ENCODE measurements at regions of chr20 and their contacts with region 1.

Region 1: DNA sequence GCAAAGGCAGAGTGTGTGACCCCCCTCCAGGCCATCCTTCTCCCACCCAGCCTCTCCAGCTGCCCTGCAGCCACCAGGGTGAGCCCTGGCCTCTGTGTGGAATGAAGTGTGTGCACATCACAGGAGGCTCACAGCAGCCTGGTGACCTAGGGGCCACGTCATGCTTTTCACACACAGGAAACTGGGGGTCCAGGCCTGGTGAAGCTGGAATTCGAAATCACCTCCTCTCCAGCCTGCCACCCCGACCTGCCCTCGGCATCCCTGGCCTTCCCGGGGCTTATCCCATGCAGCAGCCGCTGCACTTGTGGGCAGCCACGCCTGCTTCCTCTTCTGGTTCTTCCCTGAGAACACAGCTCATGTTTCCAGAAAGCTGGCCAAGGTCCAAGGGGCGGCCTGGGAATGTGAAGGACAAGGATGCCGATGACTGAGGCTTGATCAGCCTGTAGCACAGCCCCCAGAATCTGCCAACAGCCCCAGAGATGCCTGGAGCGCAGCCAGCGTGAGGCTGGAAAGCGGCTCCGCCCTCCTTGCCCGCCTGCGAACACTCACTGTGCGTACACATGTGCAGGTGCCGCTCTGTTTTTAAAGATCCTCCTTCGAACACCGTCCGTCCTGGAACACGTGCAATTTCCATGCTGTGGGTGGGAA is 4.2 kb upstream of the NTSR1 start:
- DNase-seq: peak; percentile 77
- ATAC-seq: peak; percentile 44
- H3K4me3 ChIP-seq: peak overlapping the region in 1 of 2 experiments; percentile 32; a peak in 2 of 4 replicates
- H3K27ac ChIP-seq: peak overlapping the region; percentile 91
- H3K4me1 ChIP-seq: peaks cover 70% of the 10 kb centered on the region
- H3K27me3 ChIP-seq: no peaks in the 10 kb centered on the region
- CTCF ChIP-seq: peak; percentile 26; the same call in 1 of the 2 replicates

Region 2: GRCh38 chr20:62668441-62669027 is 35.9 kb before region 1 on chr20:
- CTCF ChIA-PET with region 1: interaction called, 6 read pairs
- POLR2A ChIA-PET with region 1: no interaction called
- in situ Hi-C with region 1: no loop called
- intact Hi-C with region 1: loop called (anchors 5 kb)
- DNase-seq: peak; percentile 30
- ATAC-seq: peak; percentile 52
- H3K4me3 ChIP-seq: no peak overlapping the region
- H3K27ac ChIP-seq: peak overlapping the region; percentile 39; the same call in 1 of the 2 replicates
- H3K4me1 ChIP-seq: peaks cover 52% of the 10 kb centered on the region
- H3K27me3 ChIP-seq: no peaks in the 10 kb centered on the region
- CTCF ChIP-seq: no peak; the same call in 1 of the 2 replicates

Region 3: GRCh38 chr20:62780204-62780603 is 75.8 kb after region 1 on chr20:
- CTCF ChIA-PET with region 1: interaction called, 12 read pairs
- POLR2A ChIA-PET with region 1: no interaction called
- in situ Hi-C with region 1: no loop called
- intact Hi-C with region 1: no loop called
- DNase-seq: no peak
- ATAC-seq: no peak
- H3K4me3 ChIP-seq: no peak overlapping the region
- H3K27ac ChIP-seq: no peak overlapping the region
- H3K4me1 ChIP-seq: no peaks in the 10 kb centered on the region; the same call in 1 of the 2 replicates
- H3K27me3 ChIP-seq: no peaks in the 10 kb centered on the region
- CTCF ChIP-seq: no peak

Measured in Panc1 (cell line).